Activated CD4-positive, alpha-beta T cell treated with anti-CD3 and anti-CD28 coated beads, Interleukin-2, amount 10 ng/mL, durations not matched to agents 24 days and 14 days (primary cell): ENCODE measurements at regions of chr4 and their contacts with region 1.

Region 1: DNA sequence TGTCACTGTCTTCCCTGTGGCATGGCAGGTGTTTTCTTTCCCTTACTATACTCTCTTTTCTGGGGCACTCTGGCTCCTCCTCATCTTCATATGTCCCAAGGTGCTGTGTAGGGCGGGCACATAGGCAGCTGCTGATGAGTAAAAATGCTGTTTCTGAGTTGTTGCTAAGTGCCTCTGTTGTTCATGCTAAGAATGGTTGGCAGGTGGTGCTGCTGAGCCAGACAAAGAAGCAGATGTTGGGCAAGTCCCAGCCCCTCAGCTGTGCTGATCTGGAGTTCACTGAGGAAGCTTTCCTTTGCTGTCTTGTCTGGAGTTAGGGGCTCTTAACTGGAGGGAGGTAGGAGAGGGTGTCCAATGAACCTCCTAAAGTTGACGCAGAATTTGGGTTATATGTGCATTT is 40.6 kb downstream of the HADH start:
- DNase-seq: peak; percentile 93
- H3K4me3 Mint-ChIP-seq: peak overlapping the region; percentile 71
- H3K27ac Mint-ChIP-seq: peak overlapping the region; percentile 91
- H3K4me1 Mint-ChIP-seq: peaks cover 60% of the 10 kb centered on the region
- H3K27me3 Mint-ChIP-seq: no peaks in the 10 kb centered on the region

Region 2: GRCh38 chr4:108053251-108053711 is 22.9 kb after region 1 on chr4:
- intact Hi-C with region 1: loop called (anchors 1 kb)
- DNase-seq: no peak
- H3K4me3 Mint-ChIP-seq: peak overlapping the region; percentile 31
- H3K27ac Mint-ChIP-seq: peak overlapping the region; percentile 81
- H3K4me1 Mint-ChIP-seq: peaks cover 62% of the 10 kb centered on the region
- H3K27me3 Mint-ChIP-seq: no peaks in the 10 kb centered on the region

Region 3: GRCh38 chr4:108166441-108167315 is 136.3 kb after region 1 on chr4:
- intact Hi-C with region 1: loop called (anchors 1 kb)
- DNase-seq: peak; percentile 90
- H3K4me3 Mint-ChIP-seq: peak overlapping the region; percentile 97
- H3K27ac Mint-ChIP-seq: peak overlapping the region; percentile 94
- H3K4me1 Mint-ChIP-seq: peaks cover 55% of the 10 kb centered on the region
- H3K27me3 Mint-ChIP-seq: peaks cover 14% of the 10 kb centered on the region

Region 4: GRCh38 chr4:108355186-108355901 is 325.0 kb after region 1 on chr4:
- intact Hi-C with region 1: loop called (anchors 5 kb)
- DNase-seq: peak; percentile 88
- H3K4me3 Mint-ChIP-seq: peak overlapping the region; percentile 71
- H3K27ac Mint-ChIP-seq: peak overlapping the region; percentile 26
- H3K4me1 Mint-ChIP-seq: peaks cover 49% of the 10 kb centered on the region
- H3K27me3 Mint-ChIP-seq: no peaks in the 10 kb centered on the region

Region 5: GRCh38 chr4:108492816-108493595 is 462.7 kb after region 1 on chr4:
- intact Hi-C with region 1: loop called (anchors 1 kb)
- DNase-seq: peak; percentile 69
- H3K4me3 Mint-ChIP-seq: no peak overlapping the region
- H3K27ac Mint-ChIP-seq: no peak overlapping the region
- H3K4me1 Mint-ChIP-seq: peaks cover 7% of the 10 kb centered on the region
- H3K27me3 Mint-ChIP-seq: peaks cover 4% of the 10 kb centered on the region

Region 6: DNA sequence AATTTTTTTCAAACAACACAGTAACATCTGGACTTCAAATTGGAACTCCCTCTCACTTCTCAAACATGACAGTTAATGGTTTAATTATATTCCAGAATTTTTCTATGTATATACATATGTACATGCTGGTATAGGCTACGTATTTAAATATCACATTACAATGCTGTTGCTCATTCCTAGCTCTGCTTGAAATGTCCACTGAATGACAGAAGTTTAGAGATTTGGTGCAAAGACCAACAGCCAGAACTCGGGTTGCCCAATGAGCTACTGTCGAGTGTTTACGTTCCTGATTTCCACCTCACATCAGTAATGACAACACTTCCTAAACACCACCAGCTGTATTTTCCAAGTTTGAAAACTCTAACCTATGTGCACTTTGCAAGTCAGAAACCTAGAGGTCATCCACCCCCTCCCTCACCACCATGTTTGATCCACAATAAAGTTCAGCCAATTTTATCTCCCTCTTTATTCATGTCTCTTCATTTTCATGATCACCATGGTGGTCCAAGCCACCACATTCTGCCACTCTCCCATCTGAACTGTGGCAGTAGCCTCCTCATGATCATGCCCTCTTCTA is 540.7 kb after region 1 on chr4:
- intact Hi-C with region 1: loop called (anchors 2 kb)
- DNase-seq: no peak
- H3K4me3 Mint-ChIP-seq: no peak overlapping the region
- H3K27ac Mint-ChIP-seq: peak overlapping the region; percentile 13
- H3K4me1 Mint-ChIP-seq: peaks cover 14% of the 10 kb centered on the region
- H3K27me3 Mint-ChIP-seq: peaks cover 1% of the 10 kb centered on the region

Region 7: DNA sequence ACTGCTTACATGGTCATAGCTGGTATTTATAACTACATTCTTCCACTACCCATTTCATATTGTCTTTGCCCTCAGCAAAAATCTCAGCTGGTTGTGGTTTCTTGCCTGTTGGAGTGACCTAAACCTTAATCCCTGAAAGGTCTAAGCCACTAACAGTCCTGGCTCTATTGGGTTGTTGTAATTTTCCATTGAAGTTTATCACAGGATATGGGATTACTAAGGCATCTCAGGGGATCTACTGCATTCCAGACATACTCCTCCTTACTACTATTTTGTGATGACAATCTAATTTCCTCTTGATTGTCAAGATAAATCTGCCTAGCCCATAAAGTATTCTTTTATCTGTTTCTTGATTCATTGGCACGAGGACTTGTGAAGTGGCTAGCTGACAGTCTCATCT is 613.9 kb after region 1 on chr4:
- intact Hi-C with region 1: no loop called
- DNase-seq: no peak
- H3K4me3 Mint-ChIP-seq: no peak overlapping the region
- H3K27ac Mint-ChIP-seq: no peak overlapping the region
- H3K4me1 Mint-ChIP-seq: no peaks in the 10 kb centered on the region
- H3K27me3 Mint-ChIP-seq: no peaks in the 10 kb centered on the region